CD8-positive, alpha-beta T cell (primary cell): ENCODE measurements at regions of chr16 and their contacts with region 1.

Region 1: GRCh38 chr16:50806099-50807062 is 64.5 kb downstream of the CYLD start:
- DNase-seq: peak; percentile 69 to 93 (median 86)
- ATAC-seq: peak; percentile 96
- H3K4me3 ChIP-seq: peak overlapping the region; percentile 36 to 38
- H3K4me3 Mint-ChIP-seq: peak overlapping the region; percentile 81
- H3K27ac ChIP-seq: no peak overlapping the region
- H3K27ac Mint-ChIP-seq: peak overlapping the region; percentile 88
- H3K4me1 ChIP-seq: peaks cover 3% of the 10 kb centered on the region
- H3K4me1 Mint-ChIP-seq: peaks cover 11% of the 10 kb centered on the region
- H3K27me3 ChIP-seq: no peaks in the 10 kb centered on the region
- H3K27me3 Mint-ChIP-seq: no peaks in the 10 kb centered on the region
- CTCF ChIP-seq: peak; percentile 96

Region 2: DNA sequence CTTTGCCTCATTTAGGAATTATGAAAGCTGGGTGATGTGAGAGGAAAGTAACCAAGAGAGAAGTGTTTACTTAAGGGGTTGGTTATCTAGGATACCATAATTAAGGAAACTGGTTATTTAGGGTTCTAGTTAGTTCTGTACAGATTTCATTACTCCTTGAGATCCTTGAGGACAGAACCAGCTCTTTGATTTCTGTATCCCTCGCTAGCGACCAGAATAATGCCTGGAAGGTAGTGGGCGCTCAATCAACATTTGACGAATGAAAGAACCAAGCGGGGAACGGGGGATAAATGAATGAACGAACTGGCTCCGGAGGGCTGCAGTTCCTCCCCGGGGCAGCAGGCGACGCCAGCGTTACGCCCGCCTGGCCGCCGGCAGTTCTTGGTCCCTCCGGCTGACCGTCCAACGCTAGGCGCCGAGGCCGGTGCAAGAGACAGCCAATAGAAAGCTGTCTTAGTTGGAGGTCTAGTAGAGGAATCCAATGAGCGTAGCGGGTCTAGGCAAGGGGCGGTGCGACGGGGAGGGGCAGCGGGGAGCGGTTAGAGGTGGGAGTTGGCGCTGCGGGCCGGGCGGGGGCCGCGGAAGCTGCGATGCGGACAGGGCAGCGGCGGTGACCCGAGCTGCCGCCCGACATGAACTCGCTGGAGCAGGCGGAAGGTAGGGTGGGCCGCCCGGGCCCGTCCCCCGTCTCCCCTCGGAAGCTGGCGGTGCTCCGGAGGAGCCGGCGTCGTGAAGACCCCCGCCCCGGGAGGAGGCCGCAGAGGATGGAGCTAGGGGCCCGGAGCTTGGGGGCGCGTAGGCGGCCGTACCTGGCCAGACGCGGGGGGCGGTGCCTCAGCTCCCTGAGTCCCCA is 781.5 kb before region 1 on chr16 and contains the start of gene CNEP1R1:
- CTCF ChIA-PET with region 1: interaction called, 10 read pairs
- POLR2A ChIA-PET with region 1: interaction called, 5 read pairs
- intact Hi-C with region 1: loop called (anchors 1 kb)
- DNase-seq: peak; percentile 86 to 97 (median 91)
- ATAC-seq: peak; percentile 93
- H3K4me3 ChIP-seq: peak within 1 kb of the TSS; percentile 74 to 79
- H3K4me3 Mint-ChIP-seq: peak within 1 kb of the TSS; percentile 97
- H3K27ac ChIP-seq: peak within 1 kb of the TSS; percentile 49 to 65
- H3K27ac Mint-ChIP-seq: peak within 1 kb of the TSS; percentile 94
- H3K4me1 ChIP-seq: peaks cover 17% of the 10 kb centered on the region
- H3K4me1 Mint-ChIP-seq: peaks cover 27% of the 10 kb centered on the region
- H3K27me3 ChIP-seq: no peaks in the 10 kb centered on the region
- H3K27me3 Mint-ChIP-seq: no peaks in the 10 kb centered on the region
- CTCF ChIP-seq: peak; percentile 99
- total RNA-seq, gene CNEP1R1: 37.6 to 41.0 TPM

Region 3: GRCh38 chr16:50210266-50211038 is 595.9 kb before region 1 on chr16:
- CTCF ChIA-PET with region 1: interaction called, 32 read pairs
- POLR2A ChIA-PET with region 1: no interaction called
- intact Hi-C with region 1: loop called (anchors 1 kb)
- DNase-seq: peak; percentile 34 to 76 (median 60)
- ATAC-seq: peak; percentile 90
- H3K4me3 ChIP-seq: no peak overlapping the region
- H3K4me3 Mint-ChIP-seq: no peak overlapping the region
- H3K27ac ChIP-seq: no peak overlapping the region
- H3K27ac Mint-ChIP-seq: peak overlapping the region; percentile 72
- H3K4me1 ChIP-seq: peaks cover 3% of the 10 kb centered on the region
- H3K4me1 Mint-ChIP-seq: peaks cover 39% of the 10 kb centered on the region
- H3K27me3 ChIP-seq: no peaks in the 10 kb centered on the region
- H3K27me3 Mint-ChIP-seq: no peaks in the 10 kb centered on the region
- CTCF ChIP-seq: peak; percentile 61

Region 4: DNA sequence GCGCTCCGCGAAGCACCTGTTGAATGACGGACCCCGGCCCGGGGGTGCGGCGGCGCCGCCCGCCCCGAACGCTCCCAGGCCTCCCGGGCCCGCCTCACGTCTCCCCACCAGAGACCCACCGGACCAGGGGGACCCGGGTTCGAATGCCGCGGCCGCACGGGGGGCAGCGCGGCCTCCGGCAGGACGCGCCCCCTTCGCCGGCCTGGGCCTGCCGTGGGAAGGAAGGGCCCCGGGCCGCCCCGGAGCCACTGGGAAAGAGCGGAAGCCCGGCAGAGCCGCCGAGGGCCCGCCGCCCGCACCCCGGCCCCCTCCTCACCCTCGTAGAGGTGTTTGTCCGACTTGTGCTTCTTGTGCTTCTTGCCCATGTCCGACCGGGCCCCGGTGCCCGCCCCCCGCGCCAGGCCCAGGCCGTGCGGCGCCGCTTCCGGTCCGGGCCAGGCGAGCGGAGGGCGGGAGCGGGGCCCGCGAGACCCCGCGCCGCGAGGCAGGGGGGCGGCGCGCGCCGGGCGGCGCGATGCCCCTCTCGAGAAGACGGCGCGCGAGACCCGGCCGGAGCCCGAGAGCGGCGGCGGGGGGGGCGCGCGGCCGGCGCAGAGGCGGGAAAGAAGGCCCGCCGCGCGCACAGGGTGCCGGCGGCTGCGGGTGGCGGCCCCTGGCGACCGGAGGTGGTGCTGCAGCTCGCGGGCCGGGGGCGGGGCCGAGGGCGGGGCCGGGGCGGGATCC is 437.8 kb before region 1 on chr16 and contains the start of gene BRD7:
- CTCF ChIA-PET with region 1: interaction called, 12 read pairs
- POLR2A ChIA-PET with region 1: no interaction called
- intact Hi-C with region 1: loop called (anchors 5 kb)
- DNase-seq: peak; percentile 60 to 88 (median 71)
- ATAC-seq: peak; percentile 94
- H3K4me3 ChIP-seq: peak within 1 kb of the TSS; percentile 54 to 60
- H3K4me3 Mint-ChIP-seq: peak within 1 kb of the TSS; percentile 85
- H3K27ac ChIP-seq: peak within 1 kb of the TSS; percentile 56 to 79
- H3K27ac Mint-ChIP-seq: peak within 1 kb of the TSS; percentile 95
- H3K4me1 ChIP-seq: peaks cover 41% of the 10 kb centered on the region
- H3K4me1 Mint-ChIP-seq: peaks cover 52% of the 10 kb centered on the region
- H3K27me3 ChIP-seq: no peaks in the 10 kb centered on the region
- H3K27me3 Mint-ChIP-seq: no peaks in the 10 kb centered on the region
- CTCF ChIP-seq: no peak
- total RNA-seq, gene BRD7: 113 to 117 TPM

Region 5: DNA sequence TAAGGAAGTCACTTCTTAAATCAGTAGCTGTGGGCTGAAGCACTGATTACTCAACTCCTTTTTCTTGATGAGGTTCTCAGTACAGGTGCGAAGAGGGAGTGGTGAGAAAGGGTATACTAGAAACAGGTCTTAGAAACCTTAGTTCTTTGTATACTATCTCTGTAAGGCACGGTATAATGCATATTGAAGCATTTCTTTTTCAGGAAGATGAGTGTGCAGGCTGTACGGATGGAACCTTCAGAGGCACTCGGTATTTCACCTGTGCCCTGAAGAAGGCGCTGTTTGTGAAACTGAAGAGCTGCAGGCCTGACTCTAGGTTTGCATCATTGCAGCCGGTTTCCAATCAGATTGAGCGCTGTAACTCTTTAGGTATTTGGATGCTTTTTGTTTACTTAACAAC is 25.3 kb before region 1 on chr16:
- CTCF ChIA-PET with region 1: interaction called, 49 read pairs
- POLR2A ChIA-PET with region 1: interaction called, 9 read pairs
- intact Hi-C with region 1: no loop called
- DNase-seq: peak in 2 of 9 experiments; percentile 19 to 40
- ATAC-seq: peak; percentile 67
- H3K4me3 ChIP-seq: no peak overlapping the region
- H3K4me3 Mint-ChIP-seq: peak overlapping the region; percentile 38
- H3K27ac ChIP-seq: no peak overlapping the region
- H3K27ac Mint-ChIP-seq: peak overlapping the region; percentile 68
- H3K4me1 ChIP-seq: peaks cover 10% of the 10 kb centered on the region
- H3K4me1 Mint-ChIP-seq: peaks cover 52% of the 10 kb centered on the region
- H3K27me3 ChIP-seq: no peaks in the 10 kb centered on the region
- H3K27me3 Mint-ChIP-seq: no peaks in the 10 kb centered on the region
- CTCF ChIP-seq: no peak

Region 6: DNA sequence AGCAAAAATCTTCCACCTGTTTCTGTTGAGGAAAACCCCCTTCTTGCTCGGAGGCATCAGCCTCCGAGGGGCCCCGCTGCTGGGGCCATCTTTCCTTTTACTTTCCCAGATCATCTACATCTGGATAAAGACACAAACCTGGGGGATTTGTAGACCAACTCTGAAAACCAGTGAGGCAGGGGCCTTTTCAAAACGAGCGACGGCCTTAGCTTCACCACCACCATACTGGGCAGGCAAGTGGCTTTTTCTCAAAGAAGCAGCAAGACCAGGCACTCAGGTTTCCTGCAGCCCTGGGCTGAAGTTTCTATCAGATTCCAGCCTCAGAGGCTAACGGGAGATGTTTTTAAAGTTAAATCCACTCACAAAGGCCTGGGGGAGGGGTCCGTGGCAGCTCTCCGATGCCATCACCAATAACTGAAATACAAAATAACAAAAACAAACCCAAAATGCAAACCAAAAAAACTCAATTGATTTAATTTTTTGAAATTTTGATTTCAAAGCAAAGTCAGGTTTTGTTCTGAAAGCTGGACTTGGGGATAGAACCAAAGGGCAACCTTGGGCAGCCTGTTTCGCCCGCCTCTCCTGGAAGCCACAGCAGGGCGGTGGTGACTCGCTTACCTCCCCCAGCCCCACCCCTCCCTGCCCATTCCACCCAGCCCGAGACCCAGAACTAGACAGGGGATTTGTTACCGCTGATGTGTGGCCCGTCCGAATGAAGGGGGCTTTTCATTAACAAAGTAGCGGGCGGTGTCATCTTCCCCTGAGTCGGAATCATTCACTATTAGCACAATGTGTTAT is 288.9 kb after region 1 on chr16:
- CTCF ChIA-PET with region 1: no interaction called
- POLR2A ChIA-PET with region 1: no interaction called
- intact Hi-C with region 1: no loop called
- DNase-seq: no peak
- ATAC-seq: no peak
- H3K4me3 ChIP-seq: no peak overlapping the region
- H3K4me3 Mint-ChIP-seq: no peak overlapping the region
- H3K27ac ChIP-seq: no peak overlapping the region
- H3K27ac Mint-ChIP-seq: no peak overlapping the region
- H3K4me1 ChIP-seq: no peaks in the 10 kb centered on the region
- H3K4me1 Mint-ChIP-seq: no peaks in the 10 kb centered on the region
- H3K27me3 ChIP-seq: no peaks in the 10 kb centered on the region
- H3K27me3 Mint-ChIP-seq: peaks cover 4% of the 10 kb centered on the region
- CTCF ChIP-seq: no peak